Activated naive CD4-positive, alpha-beta T cell treated with anti-CD3 and anti-CD28 coated beads for 36 hours (primary cell): ENCODE measurements at regions of chr12 and their contacts with region 1.

Region 1: GRCh38 chr12:66964629-66965028 is 285.8 kb upstream of the GRIP1 start:
- DNase-seq: peak; percentile 69
- H3K4me3 Mint-ChIP-seq: no peak overlapping the region
- H3K27ac Mint-ChIP-seq: no peak overlapping the region
- H3K4me1 Mint-ChIP-seq: peaks cover 26% of the 10 kb centered on the region
- H3K27me3 Mint-ChIP-seq: no peaks in the 10 kb centered on the region

Region 2: GRCh38 chr12:66910366-66910974 is 54.2 kb before region 1 on chr12:
- CTCF ChIA-PET with region 1: no interaction called
- intact Hi-C with region 1: loop called (anchors 2 kb)
- DNase-seq: no peak
- H3K4me3 Mint-ChIP-seq: no peak overlapping the region
- H3K27ac Mint-ChIP-seq: no peak overlapping the region
- H3K4me1 Mint-ChIP-seq: peaks cover 21% of the 10 kb centered on the region
- H3K27me3 Mint-ChIP-seq: no peaks in the 10 kb centered on the region

Region 3: DNA sequence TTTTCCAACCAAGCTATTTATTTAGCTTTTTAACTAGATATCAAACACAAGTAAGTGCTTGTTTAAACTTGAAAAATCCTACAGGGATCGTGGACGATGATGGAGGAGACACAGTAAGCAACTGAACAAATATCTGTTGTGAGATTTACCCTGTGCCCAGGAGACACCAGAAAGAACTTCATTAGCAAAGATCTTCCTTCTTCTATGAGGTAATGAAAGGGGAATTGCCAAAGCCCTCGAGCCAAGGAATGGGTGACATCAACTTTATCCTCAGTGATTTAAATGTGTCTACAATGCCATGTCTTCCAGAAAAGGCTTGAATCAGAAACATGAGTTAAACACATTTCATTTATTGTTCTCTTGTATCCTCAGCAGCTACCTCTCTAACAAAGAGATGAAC is 29.9 kb before region 1 on chr12:
- CTCF ChIA-PET with region 1: no interaction called
- intact Hi-C with region 1: no loop called
- DNase-seq: no peak
- H3K4me3 Mint-ChIP-seq: no peak overlapping the region
- H3K27ac Mint-ChIP-seq: no peak overlapping the region
- H3K4me1 Mint-ChIP-seq: peaks cover 1% of the 10 kb centered on the region
- H3K27me3 Mint-ChIP-seq: no peaks in the 10 kb centered on the region

Region 4: GRCh38 chr12:66947119-66947518 is 17.5 kb before region 1 on chr12:
- CTCF ChIA-PET with region 1: no interaction called
- intact Hi-C with region 1: loop called (anchors 2 kb)
- DNase-seq: peak; percentile 5
- H3K4me3 Mint-ChIP-seq: no peak overlapping the region
- H3K27ac Mint-ChIP-seq: no peak overlapping the region
- H3K4me1 Mint-ChIP-seq: peaks cover 22% of the 10 kb centered on the region
- H3K27me3 Mint-ChIP-seq: no peaks in the 10 kb centered on the region